Breast epithelium (tissue), 4 donors: ENCODE measurements at regions of chr11 and their contacts with region 1.

Region 1: DNA sequence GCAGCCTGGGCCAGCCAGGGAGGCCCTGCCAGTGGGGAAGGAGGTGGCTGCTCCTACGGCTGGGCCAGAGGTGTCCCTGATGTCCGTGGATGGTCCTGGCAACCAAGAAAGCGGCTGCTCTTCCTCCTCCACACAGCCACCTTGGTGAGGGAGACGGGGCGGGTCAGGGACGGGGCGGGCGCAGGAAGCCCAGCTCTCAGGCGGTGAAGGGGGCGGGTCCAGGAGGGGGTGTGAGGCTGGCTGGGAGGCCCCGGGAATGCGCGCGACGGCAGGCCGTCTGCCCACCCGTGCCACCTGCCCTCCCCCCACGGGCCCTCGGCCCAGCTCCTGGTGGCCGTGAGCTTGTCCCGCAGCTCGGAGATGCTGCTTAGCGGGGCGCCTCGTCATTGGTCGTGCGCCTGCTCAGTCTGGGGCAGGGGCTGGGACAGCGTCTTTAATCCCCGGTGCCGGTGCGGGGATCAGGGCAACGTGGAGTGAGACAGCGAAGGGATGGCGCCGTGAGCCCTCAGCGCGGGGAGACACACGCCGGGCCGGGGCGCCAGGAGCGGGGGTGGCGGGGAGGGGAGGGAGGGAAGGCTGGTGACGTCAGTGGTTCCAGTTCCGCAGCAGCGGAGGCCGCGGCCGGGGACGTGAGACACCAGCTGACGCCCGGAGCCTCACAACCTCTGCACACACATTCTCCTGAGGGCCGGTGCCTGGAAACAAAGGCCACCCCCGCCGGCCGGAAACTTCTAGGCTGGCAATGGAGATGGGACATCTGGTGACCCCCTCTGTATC is 6.7 kb upstream of the BRSK2 start:
- DNase-seq: peak; percentile 66 to 71
- H3K4me3 ChIP-seq: peak overlapping the region; percentile 45 to 81 (median 59)
- H3K27ac ChIP-seq: peak overlapping the region; percentile 84 to 89
- H3K4me1 ChIP-seq: no peaks in the 10 kb centered on the region
- H3K27me3 ChIP-seq: no peaks in the 10 kb centered on the region
- CTCF ChIP-seq: no peak
- POLR2A ChIP-seq: no peak

Region 2: DNA sequence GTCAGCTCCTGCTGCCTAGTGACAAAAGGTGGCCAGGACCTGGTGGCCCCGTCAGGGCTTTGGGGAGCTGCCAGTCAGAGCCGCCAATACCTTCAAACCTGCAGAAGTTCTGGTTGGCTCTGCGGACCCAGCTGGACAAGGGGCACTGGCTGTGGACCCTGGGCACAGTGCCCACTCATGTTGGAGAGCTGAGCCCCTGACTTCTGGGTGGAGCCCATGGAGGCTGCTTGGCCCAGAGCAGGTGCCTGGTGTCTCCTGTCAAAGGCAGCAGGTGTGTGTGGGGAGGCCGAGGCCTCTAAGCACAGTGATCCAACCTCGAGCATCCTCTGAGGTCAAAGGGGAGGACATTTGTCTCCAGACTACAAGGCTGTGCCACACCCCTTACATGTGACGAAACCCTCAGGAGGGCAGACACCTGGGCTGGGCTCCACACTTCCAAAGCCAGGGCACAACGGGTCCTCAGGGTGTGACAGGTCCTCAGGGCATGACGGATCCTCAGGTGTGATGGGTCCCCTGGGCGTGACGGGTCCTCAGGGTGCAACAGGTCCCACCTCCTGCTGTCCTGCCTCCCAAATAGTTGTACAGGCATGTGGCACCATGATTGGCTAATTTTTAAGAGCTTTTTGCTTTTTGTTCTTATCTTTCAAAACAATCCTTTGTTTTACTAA is 271.3 kb before region 1 on chr11:
- intact Hi-C with region 1: no loop called
- DNase-seq: no peak
- H3K4me3 ChIP-seq: no peak overlapping the region
- H3K27ac ChIP-seq: no peak overlapping the region
- H3K4me1 ChIP-seq: no peaks in the 10 kb centered on the region
- H3K27me3 ChIP-seq: peaks cover 0 to 31% of the 10 kb centered on the region in 2 donors
- CTCF ChIP-seq: no peak
- POLR2A ChIP-seq: no peak

Region 3: GRCh38 chr11:1369371-1370005 is 13.5 kb before region 1 on chr11:
- intact Hi-C with region 1: no loop called
- DNase-seq: no peak
- H3K4me3 ChIP-seq: no peak overlapping the region
- H3K27ac ChIP-seq: no peak overlapping the region
- H3K4me1 ChIP-seq: no peaks in the 10 kb centered on the region
- H3K27me3 ChIP-seq: peaks cover 0 to 22% of the 10 kb centered on the region in 2 donors
- CTCF ChIP-seq: no peak
- POLR2A ChIP-seq: no peak

Region 4: GRCh38 chr11:1410366-1411291 is 27.6 kb after region 1 on chr11:
- intact Hi-C with region 1: loop called (anchors 1 kb)
- DNase-seq: no peak
- H3K4me3 ChIP-seq: no peak overlapping the region
- H3K27ac ChIP-seq: no peak overlapping the region
- H3K4me1 ChIP-seq: no peaks in the 10 kb centered on the region
- H3K27me3 ChIP-seq: peaks cover 0 to 52% of the 10 kb centered on the region in 2 donors
- CTCF ChIP-seq: no peak
- POLR2A ChIP-seq: no peak